Activated CD8-positive, alpha-beta T cell treated with anti-CD3 and anti-CD28 coated beads for 36 hours (primary cell): ENCODE measurements at regions of chr16 and their contacts with region 1.

Region 1: DNA sequence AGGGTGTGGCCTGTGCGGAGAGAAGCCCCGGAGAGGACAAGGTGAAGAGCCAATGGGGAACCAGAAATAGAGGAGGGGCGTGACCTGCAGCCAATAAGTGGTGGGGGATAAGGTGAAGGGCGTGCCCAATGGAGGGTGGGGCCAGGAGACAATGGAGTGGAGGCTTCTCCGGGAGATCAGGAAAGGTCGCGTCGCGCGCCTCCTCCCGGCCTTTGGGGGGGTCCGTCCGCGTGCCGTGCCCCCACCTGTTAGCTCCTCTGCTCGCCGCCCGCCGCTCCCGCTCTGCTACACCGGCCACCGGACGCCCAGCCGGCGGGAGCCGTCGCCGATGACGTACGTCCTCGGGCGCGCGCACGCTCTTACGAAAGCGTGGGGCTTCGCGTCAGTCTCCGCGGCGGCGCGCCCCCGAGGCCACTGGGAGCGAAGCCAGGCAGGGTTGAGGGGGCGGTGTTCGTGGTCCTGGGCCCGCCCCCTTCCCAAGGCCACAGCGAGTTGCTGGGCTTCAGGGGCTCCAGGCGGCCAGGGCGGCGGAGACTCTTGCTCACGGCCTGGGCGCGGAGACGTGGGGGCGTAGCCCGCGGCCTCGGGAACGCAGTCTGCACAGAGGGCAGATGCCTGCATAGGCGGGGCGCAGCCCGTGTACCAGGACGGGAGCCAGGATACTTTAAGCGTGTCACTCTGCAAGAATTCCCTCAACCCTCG is at the start of gene MATCAP1:
- DNase-seq: peak; percentile 97
- ATAC-seq: peak; percentile 97
- H3K4me3 Mint-ChIP-seq: peak within 1 kb of the TSS; percentile 66
- H3K27ac Mint-ChIP-seq: no peak within 1 kb of the TSS
- H3K4me1 Mint-ChIP-seq: peaks cover 17% of the 10 kb centered on the region
- H3K27me3 Mint-ChIP-seq: peaks cover 21% of the 10 kb centered on the region
- CTCF ChIP-seq: no peak
- total RNA-seq, gene MATCAP1: 49.5 to 49.9 TPM

Region 2: DNA sequence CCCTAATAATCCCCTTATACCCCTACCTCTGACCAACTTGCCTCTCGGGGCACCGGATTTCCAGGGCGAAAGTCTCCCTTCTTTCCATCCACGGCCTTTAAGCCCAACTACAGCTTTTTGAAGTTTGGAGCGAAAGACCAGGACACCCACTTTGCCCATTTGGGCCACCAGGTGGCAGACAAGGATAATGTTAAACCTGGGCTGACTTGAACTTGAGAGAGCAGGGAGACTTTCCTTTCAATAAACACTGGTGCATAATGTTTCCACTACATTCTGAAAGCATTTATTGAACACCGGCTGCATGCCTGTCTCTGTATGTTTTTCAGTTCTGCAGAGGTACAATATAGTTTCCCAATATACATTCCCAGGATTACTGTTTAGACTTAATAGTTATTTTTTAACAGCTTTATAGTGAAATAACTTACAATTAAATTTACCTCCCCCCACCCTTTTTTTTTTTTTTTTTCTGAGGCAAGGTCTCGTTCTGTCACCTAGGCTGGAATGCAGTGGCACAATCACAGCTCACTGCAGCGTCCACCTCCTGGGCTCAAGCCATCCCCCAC is 229.6 kb before region 1 on chr16:
- CTCF ChIA-PET with region 1: interaction called, 12 read pairs
- POLR2A ChIA-PET with region 1: no interaction called
- intact Hi-C with region 1: no loop called
- DNase-seq: peak; percentile 91
- ATAC-seq: peak; percentile 87
- H3K4me3 Mint-ChIP-seq: no peak overlapping the region
- H3K27ac Mint-ChIP-seq: no peak overlapping the region
- H3K4me1 Mint-ChIP-seq: peaks cover 13% of the 10 kb centered on the region
- H3K27me3 Mint-ChIP-seq: peaks cover 31% of the 10 kb centered on the region
- CTCF ChIP-seq: peak; percentile 77

Region 3: DNA sequence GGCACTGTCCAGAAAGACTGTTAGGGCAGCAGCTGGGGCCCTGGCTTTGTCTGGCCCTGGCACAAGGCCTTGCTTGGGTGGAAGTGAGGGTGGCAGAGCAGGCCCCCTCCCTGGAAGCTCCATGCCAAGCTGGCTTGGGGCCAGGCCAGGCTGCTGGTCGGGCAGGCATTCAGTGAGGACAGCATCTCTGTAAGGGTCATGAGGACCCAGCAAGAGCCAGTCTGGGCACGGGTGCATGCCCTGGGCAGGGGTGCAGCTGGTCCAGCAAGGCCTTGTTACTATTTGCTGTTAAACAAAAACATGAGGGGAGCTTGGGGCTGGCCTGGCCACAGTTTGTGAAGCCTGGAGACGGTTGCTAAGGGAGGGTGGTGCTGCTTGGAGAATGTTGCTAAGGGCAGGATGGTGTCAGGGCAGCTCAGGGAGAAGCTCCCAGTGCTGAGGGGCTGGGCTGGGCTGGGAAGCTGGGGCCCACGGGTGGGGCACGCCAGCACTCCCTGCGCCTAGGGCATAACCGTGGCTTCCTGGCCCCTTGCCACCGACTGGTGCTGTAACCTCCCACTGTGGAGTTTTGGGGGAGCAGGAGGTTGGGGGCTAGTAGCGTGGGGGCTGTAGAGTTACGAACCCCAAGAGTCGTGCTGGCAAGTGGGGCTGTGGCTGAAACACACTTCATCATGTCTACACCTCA is 207.8 kb after region 1 on chr16:
- CTCF ChIA-PET with region 1: no interaction called
- POLR2A ChIA-PET with region 1: no interaction called
- intact Hi-C with region 1: no loop called
- DNase-seq: no peak
- ATAC-seq: no peak
- H3K4me3 Mint-ChIP-seq: no peak overlapping the region
- H3K27ac Mint-ChIP-seq: no peak overlapping the region
- H3K4me1 Mint-ChIP-seq: peaks cover 4% of the 10 kb centered on the region
- H3K27me3 Mint-ChIP-seq: peaks cover 28% of the 10 kb centered on the region
- CTCF ChIP-seq: no peak